ENCODE measurements at regions of chr6 and their contacts with region 1.

Region 1: DNA sequence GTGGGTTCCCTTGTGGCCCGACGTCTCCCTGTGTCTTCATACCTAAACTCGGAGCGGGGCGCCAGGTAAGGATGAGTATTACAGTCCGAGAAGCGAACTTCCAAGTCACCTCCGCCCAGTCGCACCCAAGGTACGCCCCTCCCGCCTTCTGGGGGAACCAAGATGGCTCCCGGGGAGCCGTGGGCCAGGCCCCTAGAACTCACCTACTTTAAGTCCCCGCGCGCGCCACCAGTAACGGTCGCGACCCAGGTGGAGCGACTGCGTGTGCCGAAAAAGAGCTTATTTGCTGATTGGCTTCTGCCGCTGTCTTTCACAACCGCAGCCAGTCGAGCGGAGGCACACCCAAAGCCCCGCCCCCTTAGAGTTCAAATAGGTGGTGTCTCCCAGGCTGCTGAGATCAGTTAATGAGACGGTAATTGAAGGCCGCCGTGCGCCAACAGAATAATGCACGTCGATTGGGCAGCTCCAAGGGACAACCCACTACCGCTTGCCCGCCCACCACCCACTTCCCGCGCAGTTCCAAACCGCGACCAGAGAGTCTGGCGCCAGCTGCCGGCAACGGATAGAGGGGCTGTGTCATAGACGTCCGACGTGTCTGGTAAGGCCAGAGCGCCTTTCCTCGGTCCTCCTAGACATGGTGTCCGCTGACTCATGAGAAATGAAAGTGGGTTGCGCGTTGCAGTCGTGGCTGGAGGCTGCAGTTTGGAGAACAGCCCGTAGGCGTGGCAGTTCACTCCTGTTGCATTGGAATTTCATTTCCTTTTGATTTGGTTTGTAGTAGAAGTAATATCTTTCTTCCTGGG is at the start of gene MDC1:
- DNase-seq: peak; percentile 100
- ATAC-seq: peak; percentile 91
- H3K4me3 ChIP-seq: peak within 1 kb of the TSS; percentile 15 to 58
- H3K27ac ChIP-seq: peak within 1 kb of the TSS; percentile 51 to 68
- H3K4me1 ChIP-seq: no peaks in the 10 kb centered on the region
- H3K27me3 ChIP-seq: no peaks in the 10 kb centered on the region
- total RNA-seq, gene MDC1: 31.4 to 33.3 TPM

Region 2: DNA sequence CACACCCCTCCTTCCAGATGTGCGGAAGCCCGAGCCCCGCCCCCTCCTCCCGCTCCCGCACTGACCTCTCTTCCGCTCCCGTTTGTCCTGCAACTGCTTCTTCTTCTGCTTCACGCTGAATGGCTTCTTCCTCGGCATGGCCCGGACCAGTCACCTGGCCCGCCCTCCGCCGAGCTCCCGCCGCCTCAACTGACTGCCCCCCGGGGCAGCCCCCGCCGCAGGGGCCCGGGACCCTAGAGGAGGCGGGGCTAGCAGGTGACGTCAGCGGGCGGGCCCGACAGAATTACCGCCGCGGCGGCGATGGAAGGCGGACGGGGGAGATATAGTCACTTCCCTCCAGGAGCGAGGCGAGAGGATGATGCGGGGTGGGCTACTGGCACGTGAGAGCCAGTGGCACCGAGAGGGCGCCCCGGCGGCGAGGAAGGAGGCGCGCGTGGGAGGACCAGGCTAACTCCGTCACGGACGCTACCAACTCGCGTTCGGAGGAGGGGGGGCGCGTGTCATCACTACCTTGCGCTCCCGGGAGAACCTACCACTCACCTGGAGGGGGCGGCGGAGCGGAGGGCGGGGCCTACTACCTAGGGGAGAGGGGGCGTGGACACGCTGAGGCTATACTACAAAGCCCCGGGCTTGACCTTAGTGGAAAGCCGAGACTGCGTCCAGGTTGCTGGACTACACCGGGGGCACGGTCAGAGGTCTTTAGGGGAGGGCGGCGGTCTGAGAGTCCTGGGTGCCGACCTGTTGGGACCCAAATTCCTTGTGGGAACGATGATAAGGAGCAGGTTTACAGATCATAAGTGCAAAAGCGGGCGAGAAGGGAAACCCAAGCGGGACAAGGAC is 161.0 kb before region 1 on chr6 and contains the start of gene GNL1:
- intact Hi-C with region 1: loop called in 1 of 2 experiments (anchors 5 kb)
- DNase-seq: peak; percentile 96 to 97
- ATAC-seq: peak; percentile 93
- H3K4me3 ChIP-seq: peak within 1 kb of the TSS; percentile 67 to 69
- H3K27ac ChIP-seq: peak within 1 kb of the TSS; percentile 17 to 75
- H3K4me1 ChIP-seq: no peaks in the 10 kb centered on the region
- H3K27me3 ChIP-seq: no peaks in the 10 kb centered on the region
- total RNA-seq, gene GNL1: 73.7 to 76.9 TPM

Region 3: GRCh38 chr6:30678964-30679726 is 38.1 kb before region 1 on chr6:
- intact Hi-C with region 1: loop called (anchors 1 kb)
- DNase-seq: peak; percentile 91 to 96
- ATAC-seq: peak; percentile 89
- H3K4me3 ChIP-seq: no peak overlapping the region
- H3K27ac ChIP-seq: peak overlapping the region; percentile 45 to 49
- H3K4me1 ChIP-seq: peaks cover 0 to 2% of the 10 kb centered on the region in 2 donors
- H3K27me3 ChIP-seq: no peaks in the 10 kb centered on the region

Region 4: DNA sequence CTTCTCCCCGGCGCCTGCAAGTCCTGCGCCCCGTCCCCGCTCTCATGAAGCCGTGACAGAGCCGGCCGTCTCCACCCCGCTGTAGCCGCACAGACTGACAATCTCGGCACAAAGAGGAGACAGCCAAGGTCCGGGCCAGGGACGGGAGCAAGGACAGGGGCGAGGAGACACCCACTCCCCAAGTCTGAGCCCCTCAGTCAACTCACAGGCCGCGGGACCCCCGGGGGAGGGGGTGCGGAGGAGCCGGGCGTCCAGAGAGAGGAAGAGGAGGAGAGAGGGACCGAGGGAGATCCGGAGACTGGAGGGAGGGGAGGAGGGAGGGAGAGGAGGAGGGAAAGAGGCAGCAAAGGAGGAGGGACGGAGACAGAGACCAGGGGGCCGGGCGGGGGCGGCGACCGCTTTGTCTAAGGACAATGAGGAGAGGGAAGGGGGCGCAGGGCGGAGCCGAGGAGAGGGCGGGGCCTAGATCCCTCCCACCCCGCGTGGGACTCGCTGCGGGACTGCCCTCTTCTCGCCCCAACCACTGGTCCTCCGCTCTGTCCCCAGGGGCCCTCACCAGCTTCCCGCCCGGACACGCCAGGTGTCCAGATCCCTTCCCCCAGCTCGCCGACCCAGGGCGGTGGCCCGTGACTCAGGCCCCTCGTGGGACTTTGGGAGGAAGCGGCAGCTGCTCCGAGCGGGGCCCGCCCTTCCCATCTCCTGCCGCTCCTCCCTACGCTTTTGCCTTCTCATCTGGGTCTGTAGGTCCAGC is 30.2 kb before region 1 on chr6:
- intact Hi-C with region 1: loop called (anchors 1 to 2 kb)
- DNase-seq: peak; percentile 98 to 99
- ATAC-seq: peak; percentile 84
- H3K4me3 ChIP-seq: peak overlapping the region; percentile 72 to 82
- H3K27ac ChIP-seq: peak overlapping the region; percentile 24 to 94
- H3K4me1 ChIP-seq: no peaks in the 10 kb centered on the region
- H3K27me3 ChIP-seq: no peaks in the 10 kb centered on the region

Measured in aorta (tissue), 5 donors.